ENCODE measurements at regions of chr2 and their contacts with region 1.

Region 1: GRCh38 chr2:37414470-37414949 is 70.1 kb downstream of the QPCT start:
- DNase-seq: peak; percentile 68 to 69
- ATAC-seq: peak; percentile 90 to 93
- H3K4me3 ChIP-seq: no peak overlapping the region
- H3K27ac ChIP-seq: peak overlapping the region; percentile 8 to 15; a peak in 2 of 6 replicates
- H3K4me1 ChIP-seq: peaks cover 6% of the 10 kb centered on the region; the same call in 2 of the 3 replicates
- CTCF ChIP-seq: peak; percentile 99
- EP300 ChIP-seq: no peak
- POLR2A ChIP-seq: no peak
- RAD21 ChIP-seq: peak; percentile 99

Region 2: DNA sequence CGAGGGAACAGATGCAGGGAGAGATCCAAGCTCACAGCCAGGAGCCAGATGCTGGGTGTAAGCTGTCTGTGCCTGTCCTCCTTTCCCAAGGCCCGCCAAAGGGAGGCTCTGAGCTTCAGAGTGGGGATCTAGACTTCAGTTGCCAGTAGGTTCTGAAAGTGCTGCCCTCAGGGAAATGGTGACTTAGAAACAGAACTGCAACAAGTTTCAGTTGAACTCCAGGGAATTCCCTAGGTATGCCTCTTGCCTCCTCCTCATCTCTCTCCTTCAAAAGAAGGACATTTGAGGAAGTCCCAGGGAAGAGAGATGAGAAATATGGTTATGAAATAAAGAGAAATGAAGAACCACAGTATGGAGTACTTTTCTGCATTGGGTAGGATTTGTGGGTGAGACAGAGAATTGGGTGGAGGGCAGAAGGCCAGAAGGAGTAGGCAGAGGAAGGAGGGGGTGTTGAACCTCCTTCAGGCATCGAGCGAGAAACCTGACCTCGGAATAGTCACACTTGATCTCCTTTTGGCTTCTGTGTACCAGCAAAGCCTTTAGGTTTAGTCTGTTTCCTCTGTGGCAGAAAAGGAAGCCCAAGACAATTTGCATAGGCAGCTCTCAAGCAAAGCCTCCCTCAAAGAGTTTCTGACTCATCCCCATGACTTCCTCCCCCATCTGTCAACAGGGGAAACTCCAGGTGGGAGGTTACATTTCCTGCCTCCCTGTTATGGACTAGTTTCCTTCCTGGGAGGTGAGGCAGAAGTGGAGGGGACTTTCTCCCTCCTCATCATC is 24.3 kb before region 1 on chr2:
- CTCF ChIA-PET with region 1: interaction called, 169 read pairs
- POLR2A ChIA-PET with region 1: no interaction called
- DNase-seq: peak; percentile 79 to 86
- ATAC-seq: peak; percentile 86 to 91
- H3K4me3 ChIP-seq: no peak overlapping the region
- H3K27ac ChIP-seq: peak overlapping the region; percentile 35 to 80
- H3K4me1 ChIP-seq: peaks cover 22% of the 10 kb centered on the region
- CTCF ChIP-seq: no peak
- EP300 ChIP-seq: no peak
- POLR2A ChIP-seq: no peak
- RAD21 ChIP-seq: no peak

Region 3: GRCh38 chr2:37443082-37443481 is 28.6 kb after region 1 on chr2:
- CTCF ChIA-PET with region 1: interaction called, 18 read pairs
- POLR2A ChIA-PET with region 1: no interaction called
- DNase-seq: no peak
- ATAC-seq: no peak
- H3K4me3 ChIP-seq: no peak overlapping the region
- H3K27ac ChIP-seq: no peak overlapping the region
- H3K4me1 ChIP-seq: no peaks in the 10 kb centered on the region
- CTCF ChIP-seq: no peak
- EP300 ChIP-seq: no peak
- POLR2A ChIP-seq: no peak
- RAD21 ChIP-seq: no peak

Region 4: GRCh38 chr2:37665604-37666362 is 251.3 kb after region 1 on chr2:
- CTCF ChIA-PET with region 1: interaction called, 24 read pairs
- POLR2A ChIA-PET with region 1: no interaction called
- DNase-seq: no peak
- ATAC-seq: no peak
- H3K4me3 ChIP-seq: no peak overlapping the region
- H3K27ac ChIP-seq: no peak overlapping the region
- H3K4me1 ChIP-seq: peaks cover 46% of the 10 kb centered on the region
- CTCF ChIP-seq: no peak
- EP300 ChIP-seq: no peak
- POLR2A ChIP-seq: no peak
- RAD21 ChIP-seq: no peak

Region 5: DNA sequence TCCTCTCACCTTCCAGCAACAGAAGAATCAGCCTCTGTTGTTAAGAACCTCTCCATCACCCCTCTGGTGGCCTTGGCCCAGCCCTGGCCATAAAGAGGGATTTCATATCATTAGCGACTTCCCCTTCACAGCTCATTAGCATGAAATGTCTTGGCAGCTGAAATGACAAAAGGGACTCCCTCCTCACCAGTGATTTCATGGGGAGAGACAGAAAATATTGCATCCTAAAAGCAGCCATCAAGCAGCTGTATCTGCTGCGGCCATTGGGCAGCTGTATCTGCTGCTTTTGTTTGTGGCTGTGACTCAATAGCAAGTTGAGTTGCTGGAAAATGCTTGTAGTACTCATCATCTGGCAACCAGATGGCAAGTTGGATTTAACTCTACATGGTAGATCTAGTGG is 404.7 kb after region 1 on chr2:
- CTCF ChIA-PET with region 1: interaction called, 433 read pairs
- POLR2A ChIA-PET with region 1: no interaction called
- DNase-seq: no peak
- ATAC-seq: no peak
- H3K4me3 ChIP-seq: no peak overlapping the region
- H3K27ac ChIP-seq: no peak overlapping the region
- H3K4me1 ChIP-seq: peaks cover 4% of the 10 kb centered on the region; the same call in 1 of the 3 replicates
- CTCF ChIP-seq: no peak
- EP300 ChIP-seq: no peak
- POLR2A ChIP-seq: no peak
- RAD21 ChIP-seq: no peak

Region 6: DNA sequence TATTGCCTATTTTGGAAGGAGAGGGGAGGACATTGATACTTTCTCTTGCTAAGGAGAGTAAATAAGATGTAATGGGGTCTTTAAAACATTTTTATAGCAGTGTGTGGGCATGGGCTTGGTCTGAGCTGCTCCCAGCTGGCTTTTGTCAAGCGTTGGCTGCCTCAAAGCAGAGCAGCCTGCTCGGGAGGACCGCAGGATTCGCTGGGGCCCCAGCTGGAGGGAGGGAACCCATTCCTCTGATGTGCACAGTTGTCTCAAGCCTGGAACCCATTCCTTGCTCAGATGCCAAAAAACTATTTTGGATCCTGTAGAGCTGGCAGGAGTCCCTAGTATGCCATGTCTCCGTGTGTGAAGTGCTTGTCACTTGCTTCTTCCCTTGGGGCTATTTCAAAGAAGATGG is 451.1 kb after region 1 on chr2:
- CTCF ChIA-PET with region 1: interaction called, 12 read pairs
- POLR2A ChIA-PET with region 1: no interaction called
- DNase-seq: no peak
- ATAC-seq: no peak
- H3K4me3 ChIP-seq: no peak overlapping the region
- H3K27ac ChIP-seq: no peak overlapping the region
- H3K4me1 ChIP-seq: no peaks in the 10 kb centered on the region
- CTCF ChIP-seq: no peak
- EP300 ChIP-seq: no peak
- POLR2A ChIP-seq: no peak
- RAD21 ChIP-seq: no peak

Region 7: DNA sequence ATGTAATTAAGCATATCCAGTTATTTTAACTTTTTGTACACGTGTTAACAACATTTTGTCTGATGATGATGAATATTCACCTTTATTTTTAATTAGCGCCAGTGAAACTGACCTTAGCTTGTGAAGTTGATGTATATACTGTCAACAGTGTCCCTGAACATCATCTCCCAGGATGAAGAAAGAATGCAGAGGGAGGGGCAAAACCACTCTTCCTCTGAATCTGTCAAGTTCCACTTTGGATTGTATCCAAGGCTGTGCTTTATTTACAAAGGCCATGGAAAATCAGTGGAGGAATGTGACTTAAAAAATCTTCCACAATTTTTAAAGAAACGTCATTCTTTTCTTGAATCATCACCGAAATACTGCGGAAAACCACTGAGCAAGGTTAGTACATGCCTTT is 506.1 kb after region 1 on chr2:
- CTCF ChIA-PET with region 1: no interaction called
- POLR2A ChIA-PET with region 1: no interaction called
- DNase-seq: no peak
- ATAC-seq: no peak
- H3K4me3 ChIP-seq: no peak overlapping the region
- H3K27ac ChIP-seq: no peak overlapping the region
- H3K4me1 ChIP-seq: peaks cover 5% of the 10 kb centered on the region; the same call in 1 of the 3 replicates
- CTCF ChIP-seq: no peak
- EP300 ChIP-seq: no peak
- POLR2A ChIP-seq: no peak
- RAD21 ChIP-seq: no peak